Aorta (tissue), 5 donors: ENCODE measurements at regions of chr7 and their contacts with region 1.

Region 1: DNA sequence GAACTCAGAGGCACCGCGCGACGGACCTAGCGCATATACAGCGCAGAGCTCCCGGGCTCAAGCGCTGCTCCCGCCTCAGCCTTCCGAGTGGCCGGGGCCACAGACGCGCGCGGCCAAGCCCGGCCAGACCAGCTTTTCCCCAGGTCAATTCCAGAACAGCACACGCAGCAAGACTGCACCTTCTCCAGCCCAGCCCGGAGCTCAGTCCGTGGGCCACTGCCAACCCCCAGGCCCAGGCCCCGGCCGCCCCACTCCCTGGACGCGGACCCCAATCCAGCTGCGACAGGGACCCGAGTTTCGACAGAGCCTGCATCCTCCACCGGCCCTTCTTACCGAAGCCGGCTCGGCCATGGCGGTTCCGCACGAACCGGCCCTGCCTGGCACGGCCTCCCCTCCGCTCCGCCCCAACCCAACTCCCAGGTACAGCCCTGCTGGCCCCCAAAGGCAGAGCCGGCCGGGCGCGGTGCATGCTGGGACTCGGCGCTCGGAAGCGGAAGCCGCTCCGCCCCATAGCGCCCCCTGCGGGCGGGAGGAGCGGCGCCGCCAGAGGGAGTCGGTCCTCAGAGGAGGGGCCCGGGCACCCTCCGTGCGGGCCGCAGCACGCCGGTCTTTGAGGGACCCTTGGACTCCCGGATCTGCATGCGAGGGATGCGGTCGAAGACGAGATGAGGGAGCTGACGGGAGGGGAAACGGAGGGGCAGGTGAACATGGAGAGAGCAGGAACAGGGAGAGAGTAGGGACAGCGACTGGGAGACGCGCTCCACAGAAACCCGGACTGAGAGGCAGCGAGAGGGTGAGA is at the start of gene ZNF425:
- DNase-seq: peak; percentile 95 to 98
- ATAC-seq: peak; percentile 99
- H3K4me3 ChIP-seq: peak within 1 kb of the TSS; percentile 71 to 74
- H3K27ac ChIP-seq: peak within 1 kb of the TSS; percentile 62 to 70
- H3K4me1 ChIP-seq: no peaks in the 10 kb centered on the region
- H3K27me3 ChIP-seq: no peaks in the 10 kb centered on the region
- total RNA-seq, gene ZNF425: 1.0 to 1.3 TPM

Region 2: DNA sequence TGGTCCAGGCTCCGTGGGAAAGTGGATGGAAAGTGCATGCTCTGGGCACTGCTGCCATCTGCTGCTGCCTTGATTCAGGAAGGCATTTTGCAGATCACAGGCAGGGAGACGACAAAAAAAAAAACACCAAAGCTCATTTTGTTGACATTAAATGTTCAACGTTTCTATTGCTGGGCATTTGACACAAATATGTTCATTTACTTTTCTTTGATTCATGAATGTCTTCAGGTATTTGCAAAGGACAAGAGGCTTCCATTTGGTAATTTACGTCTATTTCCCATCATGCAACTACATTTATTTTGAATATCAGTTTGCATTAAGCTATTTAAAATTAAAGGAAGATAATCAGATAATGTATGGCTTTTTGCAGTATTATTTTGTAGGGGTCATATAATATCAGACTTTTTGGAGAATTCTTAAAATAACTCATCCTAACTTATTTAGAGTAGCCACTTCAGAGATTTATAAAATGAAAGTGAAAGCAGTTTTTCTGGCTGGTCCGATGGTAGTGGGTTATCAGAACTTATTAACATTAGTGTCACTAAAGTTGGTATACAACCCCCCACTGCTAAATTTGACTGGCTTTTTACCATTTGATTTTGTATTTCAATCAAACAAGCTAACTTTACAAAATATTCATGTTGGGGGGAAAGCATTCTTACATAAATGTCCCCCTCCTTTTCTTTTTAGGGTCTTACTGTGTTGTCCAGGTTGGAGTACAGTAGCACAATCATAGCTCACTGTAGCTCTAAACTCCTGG is 163.1 kb before region 1 on chr7:
- intact Hi-C with region 1: no loop called
- DNase-seq: peak; percentile 79 to 83
- ATAC-seq: peak; percentile 82
- H3K4me3 ChIP-seq: peak overlapping the region; percentile 53 to 90
- H3K27ac ChIP-seq: peak overlapping the region in 1 of 2 donors; percentile 46
- H3K4me1 ChIP-seq: no peaks in the 10 kb centered on the region
- H3K27me3 ChIP-seq: no peaks in the 10 kb centered on the region

Region 3: DNA sequence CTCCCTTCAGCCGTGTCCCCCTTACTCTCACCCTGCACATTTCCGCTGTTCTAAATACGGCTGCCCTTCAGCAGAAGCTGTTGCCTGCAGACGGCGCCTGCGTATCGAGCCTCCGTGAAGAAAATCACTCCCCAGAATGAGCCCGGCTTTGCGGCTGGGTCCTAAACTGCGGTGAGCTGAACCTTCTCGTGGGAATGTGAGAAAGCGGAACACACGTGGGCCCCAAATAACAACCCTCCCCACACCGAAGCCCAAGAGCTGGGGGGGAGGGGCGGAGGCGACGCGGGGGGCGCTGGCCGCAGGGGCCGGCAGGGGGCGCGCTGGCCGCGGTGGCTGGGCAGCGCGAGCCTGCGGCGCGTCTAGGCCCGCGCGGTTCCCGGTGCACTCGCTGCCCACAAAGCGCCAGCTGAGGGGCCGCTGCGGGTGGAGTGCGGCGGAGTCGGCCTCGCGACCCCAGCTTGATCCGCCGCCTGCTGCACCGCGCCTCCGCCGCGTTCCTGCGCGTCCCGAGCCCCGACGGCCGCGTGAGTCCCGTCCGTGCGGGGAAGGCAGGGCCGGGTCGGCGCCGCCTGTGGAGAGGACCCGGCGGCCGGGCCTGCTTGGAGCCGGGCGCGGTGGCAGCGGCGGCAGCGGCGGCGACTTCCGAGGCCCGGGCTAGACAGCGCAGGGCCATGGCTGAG is 21.1 kb after region 1 on chr7 and contains the start of gene ZNF398:
- intact Hi-C with region 1: loop called in 1 of 2 experiments (anchors 1 kb)
- DNase-seq: peak; percentile 80 to 92
- ATAC-seq: peak; percentile 95
- H3K4me3 ChIP-seq: peak within 1 kb of the TSS; percentile 52 to 96
- H3K27ac ChIP-seq: peak within 1 kb of the TSS; percentile 20 to 92
- H3K4me1 ChIP-seq: no peaks in the 10 kb centered on the region
- H3K27me3 ChIP-seq: no peaks in the 10 kb centered on the region
- total RNA-seq, gene ZNF398: 12.4 to 14.1 TPM